Activated CD4-positive, alpha-beta T cell treated with anti-CD3 and anti-CD28 coated beads, Interleukin-2, amount 10 ng/mL, durations not matched to agents 24 days and 14 days (primary cell): ENCODE measurements at regions of chr5 and their contacts with region 1.

Region 1: GRCh38 chr5:80985600-80986228 is 25.6 kb downstream of the RASGRF2 start:
- DNase-seq: no peak
- H3K4me3 Mint-ChIP-seq: peak overlapping the region; percentile 22
- H3K27ac Mint-ChIP-seq: peak overlapping the region; percentile 2
- H3K4me1 Mint-ChIP-seq: peaks cover 34% of the 10 kb centered on the region
- H3K27me3 Mint-ChIP-seq: no peaks in the 10 kb centered on the region

Region 2: DNA sequence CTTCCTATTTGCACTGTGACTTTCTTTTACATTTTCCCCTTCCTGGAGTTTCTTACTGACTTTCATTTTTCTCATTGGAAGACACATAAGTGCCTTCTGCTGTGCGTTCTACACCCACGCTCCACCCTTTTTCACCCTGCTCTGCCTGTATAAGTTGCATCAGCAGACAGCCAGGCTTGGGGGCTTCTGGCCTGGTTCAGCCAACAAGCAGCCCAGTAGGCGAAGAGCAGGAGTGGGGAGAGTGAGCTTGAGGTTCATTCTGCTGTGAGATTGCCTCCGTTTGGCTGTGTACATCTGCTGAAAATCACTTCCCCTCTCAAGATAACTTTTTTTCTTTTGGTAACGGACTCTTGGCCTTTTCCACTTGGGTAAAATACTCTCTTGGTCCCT is 12.9 kb after region 1 on chr5:
- intact Hi-C with region 1: loop called (anchors 2 kb)
- DNase-seq: peak; percentile 71
- H3K4me3 Mint-ChIP-seq: peak overlapping the region; percentile 82
- H3K27ac Mint-ChIP-seq: peak overlapping the region; percentile 90
- H3K4me1 Mint-ChIP-seq: peaks cover 25% of the 10 kb centered on the region
- H3K27me3 Mint-ChIP-seq: no peaks in the 10 kb centered on the region